ENCODE measurements at regions of chr5 and their contacts with region 1.

Region 1: DNA sequence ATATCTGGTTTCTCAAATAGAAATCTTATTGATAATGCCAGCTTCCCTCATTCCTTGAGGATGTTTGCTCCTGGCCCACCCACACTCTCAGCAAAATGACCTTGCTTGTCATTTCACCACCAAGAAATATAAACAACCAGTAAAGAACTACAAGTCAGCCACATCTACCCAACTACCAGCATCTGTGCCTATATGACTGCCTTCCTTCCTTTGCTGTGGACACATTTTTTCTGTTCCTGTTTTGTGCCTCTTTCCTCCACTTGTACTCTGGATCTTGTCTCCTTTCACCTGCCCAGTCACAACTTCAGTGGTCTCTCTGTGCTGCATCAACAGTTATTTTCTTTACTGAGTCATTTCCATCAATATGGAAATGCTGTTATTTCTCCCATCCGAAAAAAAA is 20.3 kb downstream of the KIF2A start:
- DNase-seq: no peak
- ATAC-seq: peak; percentile 50
- H3K4me3 Mint-ChIP-seq: no peak overlapping the region
- H3K27ac Mint-ChIP-seq: peak overlapping the region; percentile 62
- H3K4me1 Mint-ChIP-seq: peaks cover 75% of the 10 kb centered on the region
- H3K27me3 Mint-ChIP-seq: no peaks in the 10 kb centered on the region

Region 2: GRCh38 chr5:61905613-61906012 is 420.7 kb before region 1 on chr5:
- CTCF ChIA-PET with region 1: no interaction called
- POLR2A ChIA-PET with region 1: no interaction called
- intact Hi-C with region 1: no loop called
- DNase-seq: no peak
- ATAC-seq: no peak
- H3K4me3 Mint-ChIP-seq: no peak overlapping the region
- H3K27ac Mint-ChIP-seq: no peak overlapping the region
- H3K4me1 Mint-ChIP-seq: no peaks in the 10 kb centered on the region
- H3K27me3 Mint-ChIP-seq: no peaks in the 10 kb centered on the region

Region 3: GRCh38 chr5:62315376-62316175 is 10.7 kb before region 1 on chr5:
- CTCF ChIA-PET with region 1: interaction called, 9 read pairs
- POLR2A ChIA-PET with region 1: no interaction called
- intact Hi-C with region 1: loop called (anchors 2 kb)
- DNase-seq: no peak
- ATAC-seq: no peak
- H3K4me3 Mint-ChIP-seq: no peak overlapping the region
- H3K27ac Mint-ChIP-seq: peak overlapping the region; percentile 81
- H3K4me1 Mint-ChIP-seq: peaks cover 85% of the 10 kb centered on the region
- H3K27me3 Mint-ChIP-seq: no peaks in the 10 kb centered on the region

Region 4: DNA sequence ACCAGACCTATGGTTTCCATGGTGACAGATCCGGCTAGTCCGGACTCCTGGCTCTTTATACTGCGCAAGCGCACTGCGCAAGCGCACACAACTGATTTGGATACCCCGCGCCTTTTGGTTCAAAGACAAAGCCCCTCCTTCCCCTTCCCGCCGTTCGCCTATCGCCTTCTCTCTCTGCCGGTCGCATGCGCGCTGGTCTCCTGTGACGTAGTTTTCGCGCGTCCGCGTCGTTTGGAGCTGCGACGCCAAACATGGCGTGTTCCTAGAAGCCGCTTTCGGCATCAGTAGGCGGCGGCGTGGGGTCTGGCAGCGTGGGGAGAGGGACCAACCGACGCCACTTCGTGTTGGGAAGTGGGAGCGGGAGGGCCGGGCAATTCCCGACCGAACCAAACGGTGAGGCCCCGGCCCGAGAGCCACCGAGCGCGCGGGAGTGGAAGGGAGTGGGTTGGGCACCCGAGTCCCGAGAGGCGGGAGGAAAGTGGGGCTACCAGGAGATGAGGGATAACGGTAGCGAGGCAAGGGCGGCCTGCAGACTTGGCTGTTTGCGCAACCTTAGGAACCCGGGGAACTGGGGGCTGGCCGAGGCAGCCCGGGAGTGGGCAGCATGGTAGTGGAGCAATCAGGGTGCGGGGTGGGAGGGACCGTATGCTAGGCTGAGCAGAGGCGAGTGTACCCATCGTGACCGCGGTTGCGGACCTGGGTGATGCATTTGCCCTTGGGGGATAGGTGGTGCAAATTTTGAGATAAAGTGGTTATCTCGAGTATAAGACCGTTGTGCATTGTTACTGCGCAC is 86.4 kb after region 1 on chr5 and contains the start of gene IPO11:
- CTCF ChIA-PET with region 1: no interaction called
- POLR2A ChIA-PET with region 1: no interaction called
- intact Hi-C with region 1: no loop called
- DNase-seq: peak; percentile 99
- ATAC-seq: peak; percentile 99
- H3K4me3 Mint-ChIP-seq: peak within 1 kb of the TSS; percentile 90
- H3K27ac Mint-ChIP-seq: peak within 1 kb of the TSS; percentile 85
- H3K4me1 Mint-ChIP-seq: peaks cover 25% of the 10 kb centered on the region
- H3K27me3 Mint-ChIP-seq: no peaks in the 10 kb centered on the region
- total RNA-seq, gene IPO11: 57.2 to 69.9 TPM

Region 5: DNA sequence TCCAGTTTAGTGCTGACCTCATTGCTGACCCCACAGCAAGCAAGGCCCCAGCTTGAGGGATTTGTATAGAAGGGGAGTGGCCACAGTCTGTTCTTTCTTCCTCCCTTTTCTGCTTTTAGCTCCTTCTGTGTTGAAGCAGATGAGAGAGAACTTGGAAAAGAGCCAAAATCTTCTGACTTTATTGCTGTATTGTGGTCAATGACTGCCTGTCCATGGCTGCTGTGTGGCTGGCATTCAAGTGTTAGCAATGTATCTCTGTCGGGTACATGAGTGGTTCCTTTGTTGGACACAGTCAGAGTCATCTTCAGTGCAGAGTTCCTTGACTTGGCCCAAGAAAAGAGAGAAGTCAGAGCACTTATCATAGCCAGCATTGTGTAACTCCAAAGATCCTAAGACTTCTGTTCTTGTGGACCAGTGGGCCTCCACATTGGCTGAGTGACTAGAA is 406.4 kb after region 1 on chr5:
- CTCF ChIA-PET with region 1: no interaction called
- POLR2A ChIA-PET with region 1: no interaction called
- intact Hi-C with region 1: no loop called
- DNase-seq: no peak
- ATAC-seq: no peak
- H3K4me3 Mint-ChIP-seq: no peak overlapping the region
- H3K27ac Mint-ChIP-seq: no peak overlapping the region
- H3K4me1 Mint-ChIP-seq: no peaks in the 10 kb centered on the region
- H3K27me3 Mint-ChIP-seq: peaks cover 1% of the 10 kb centered on the region